Panc1 (cell line): ENCODE measurements at regions of chr17 and their contacts with region 1.

Region 1: GRCh38 chr17:55567240-55568214 is 56.3 kb upstream of the SMIM36 start:
- DNase-seq: no peak
- ATAC-seq: no peak
- H3K4me3 ChIP-seq: no peak overlapping the region
- H3K27ac ChIP-seq: no peak overlapping the region
- H3K4me1 ChIP-seq: no peaks in the 10 kb centered on the region
- H3K27me3 ChIP-seq: no peaks in the 10 kb centered on the region
- CTCF ChIP-seq: no peak

Region 2: GRCh38 chr17:55549140-55549539 is 18.4 kb before region 1 on chr17:
- CTCF ChIA-PET with region 1: no interaction called
- POLR2A ChIA-PET with region 1: no interaction called
- in situ Hi-C with region 1: no loop called
- intact Hi-C with region 1: no loop called
- DNase-seq: no peak
- ATAC-seq: peak; percentile 71; the same call in 1 of the 2 replicates
- H3K4me3 ChIP-seq: no peak overlapping the region
- H3K27ac ChIP-seq: no peak overlapping the region
- H3K4me1 ChIP-seq: no peaks in the 10 kb centered on the region
- H3K27me3 ChIP-seq: peaks cover 7% of the 10 kb centered on the region
- CTCF ChIP-seq: peak; percentile 33

Region 3: GRCh38 chr17:55672585-55673501 is 105.3 kb after region 1 on chr17:
- CTCF ChIA-PET with region 1: no interaction called
- POLR2A ChIA-PET with region 1: no interaction called
- in situ Hi-C with region 1: no loop called
- intact Hi-C with region 1: no loop called
- DNase-seq: no peak
- ATAC-seq: no peak
- H3K4me3 ChIP-seq: no peak overlapping the region
- H3K27ac ChIP-seq: no peak overlapping the region
- H3K4me1 ChIP-seq: no peaks in the 10 kb centered on the region
- H3K27me3 ChIP-seq: no peaks in the 10 kb centered on the region; the same call in 1 of the 2 replicates
- CTCF ChIP-seq: no peak

Region 4: GRCh38 chr17:55683554-55684315 is 116.2 kb after region 1 on chr17:
- CTCF ChIA-PET with region 1: no interaction called
- POLR2A ChIA-PET with region 1: interaction called, 16 read pairs
- in situ Hi-C with region 1: no loop called
- intact Hi-C with region 1: no loop called
- DNase-seq: no peak
- ATAC-seq: no peak
- H3K4me3 ChIP-seq: no peak overlapping the region
- H3K27ac ChIP-seq: no peak overlapping the region
- H3K4me1 ChIP-seq: no peaks in the 10 kb centered on the region
- H3K27me3 ChIP-seq: peaks cover 2% of the 10 kb centered on the region; the same call in 1 of the 2 replicates
- CTCF ChIP-seq: no peak